Caco-2 (cell line): ENCODE measurements at regions of chr4 and their contacts with region 1.

Region 1: DNA sequence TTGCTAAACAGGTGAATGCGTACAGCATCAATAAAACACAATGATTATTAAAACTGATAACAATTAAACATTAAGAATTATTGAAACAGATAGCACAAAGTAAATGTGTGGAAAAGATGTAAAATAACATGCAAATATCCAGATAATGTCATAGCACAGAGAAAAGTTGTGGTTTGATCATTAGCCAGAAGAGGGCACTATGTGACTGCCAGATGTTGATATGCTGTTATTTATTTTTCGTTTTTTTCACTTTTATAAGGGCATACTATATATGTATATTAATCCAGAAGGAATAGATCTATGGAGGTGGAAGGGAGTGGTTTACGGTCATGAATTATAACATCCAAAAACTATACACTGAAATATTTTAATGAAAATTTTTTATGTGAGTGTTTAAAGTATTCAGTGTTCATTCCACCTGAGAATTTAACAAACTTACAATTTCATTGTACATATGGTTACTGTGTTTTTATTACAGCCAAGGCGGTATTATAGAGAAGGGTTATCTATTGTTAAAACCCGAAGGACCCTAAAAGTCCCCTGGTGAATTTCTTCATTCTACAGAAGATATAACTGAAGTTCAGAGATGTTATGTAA is 211.9 kb upstream of the UGT8 start:
- DNase-seq: peak in 1 of 2 experiments; percentile 24
- H3K4me3 ChIP-seq: no peak overlapping the region
- H3K4me3 Mint-ChIP-seq: no peak overlapping the region
- H3K27ac Mint-ChIP-seq: no peak overlapping the region
- H3K4me1 ChIP-seq: no peaks in the 10 kb centered on the region
- H3K4me1 Mint-ChIP-seq: no peaks in the 10 kb centered on the region
- H3K27me3 ChIP-seq: no peaks in the 10 kb centered on the region
- H3K27me3 Mint-ChIP-seq: no peaks in the 10 kb centered on the region
- CTCF ChIP-seq: peak; percentile 56 to 65

Region 2: GRCh38 chr4:113106108-113106507 is 1280.6 kb before region 1 on chr4:
- CTCF ChIA-PET with region 1: no interaction called
- POLR2A ChIA-PET with region 1: no interaction called
- intact Hi-C with region 1: loop called (anchors 5 kb)
- DNase-seq: peak in 1 of 2 experiments; percentile 41
- H3K4me3 ChIP-seq: no peak overlapping the region
- H3K4me3 Mint-ChIP-seq: no peak overlapping the region
- H3K27ac Mint-ChIP-seq: no peak overlapping the region
- H3K4me1 ChIP-seq: peaks cover 29% of the 10 kb centered on the region
- H3K4me1 Mint-ChIP-seq: peaks cover 20% of the 10 kb centered on the region
- H3K27me3 ChIP-seq: no peaks in the 10 kb centered on the region
- H3K27me3 Mint-ChIP-seq: no peaks in the 10 kb centered on the region
- CTCF ChIP-seq: peak; percentile 41 to 50

Region 3: DNA sequence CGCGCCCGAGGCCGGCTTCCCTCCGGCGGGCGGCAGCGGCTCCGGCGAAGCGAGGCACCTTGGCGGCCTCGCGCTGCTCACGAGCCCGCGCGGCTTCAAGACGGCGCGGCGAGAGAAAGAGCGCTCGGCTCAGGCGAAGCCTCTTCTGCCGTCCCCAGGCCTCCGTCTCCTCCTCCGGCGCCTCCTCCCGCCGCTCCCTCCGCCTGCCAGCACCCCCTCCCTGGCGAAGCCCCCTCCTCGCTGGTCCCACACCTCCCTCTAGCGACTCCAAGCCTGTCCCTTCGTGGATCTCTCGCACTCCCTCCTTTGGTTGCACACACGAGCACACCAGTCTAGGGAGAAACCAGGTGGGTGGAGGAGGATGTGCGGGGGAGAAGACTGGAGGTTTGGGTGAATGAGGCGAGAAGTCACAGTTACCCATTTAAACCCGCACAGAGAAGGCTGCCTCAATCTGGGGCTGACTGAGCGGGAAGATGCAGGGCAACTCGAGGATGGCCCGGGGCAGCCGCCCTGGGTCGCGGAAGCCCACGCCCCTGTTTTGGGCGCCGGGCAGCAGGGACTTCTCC is 625.0 kb before region 1 on chr4 and contains the start of gene CAMK2D:
- CTCF ChIA-PET with region 1: no interaction called
- POLR2A ChIA-PET with region 1: no interaction called
- intact Hi-C with region 1: loop called (anchors 5 kb)
- DNase-seq: peak; percentile 91 to 94
- H3K4me3 ChIP-seq: peak within 1 kb of the TSS; percentile 82
- H3K4me3 Mint-ChIP-seq: peak within 1 kb of the TSS; percentile 96
- H3K27ac Mint-ChIP-seq: peak within 1 kb of the TSS; percentile 91
- H3K4me1 ChIP-seq: peaks cover 37% of the 10 kb centered on the region
- H3K4me1 Mint-ChIP-seq: peaks cover 30% of the 10 kb centered on the region
- H3K27me3 ChIP-seq: no peaks in the 10 kb centered on the region
- H3K27me3 Mint-ChIP-seq: no peaks in the 10 kb centered on the region
- CTCF ChIP-seq: peak; percentile 35 to 82
- total RNA-seq, gene CAMK2D: 56.1 and 65.6 TPM in 2 replicates

Region 4: DNA sequence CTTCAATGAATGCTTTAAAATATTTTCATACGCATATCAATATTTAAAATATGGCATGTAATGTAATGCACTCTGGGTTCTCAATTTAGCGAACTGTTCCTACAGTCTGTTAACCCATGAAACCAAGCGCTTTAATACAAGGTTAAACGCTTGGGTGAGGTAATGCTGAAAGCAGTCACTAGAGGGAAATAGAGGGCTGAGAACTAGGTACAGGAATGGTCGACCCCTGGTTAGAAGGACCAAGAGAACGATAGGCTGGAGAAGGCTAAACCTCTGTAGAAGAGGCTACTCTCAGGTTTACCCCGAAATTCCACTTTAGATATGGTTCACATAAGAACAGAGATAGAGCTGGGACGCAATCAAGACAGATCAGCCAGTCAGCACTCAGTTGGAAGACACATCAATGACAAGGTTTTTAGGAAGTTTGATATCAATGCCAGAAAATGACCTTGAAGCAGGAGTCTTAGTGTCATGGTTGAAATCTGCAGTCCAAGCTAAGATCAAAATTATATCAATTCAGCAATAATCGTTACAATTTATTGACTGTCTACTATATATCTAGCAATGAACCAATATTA is 434.2 kb before region 1 on chr4:
- CTCF ChIA-PET with region 1: no interaction called
- POLR2A ChIA-PET with region 1: no interaction called
- intact Hi-C with region 1: loop called (anchors 1 kb)
- DNase-seq: peak; percentile 38 to 66
- H3K4me3 ChIP-seq: no peak overlapping the region
- H3K4me3 Mint-ChIP-seq: no peak overlapping the region
- H3K27ac Mint-ChIP-seq: no peak overlapping the region
- H3K4me1 ChIP-seq: peaks cover 2% of the 10 kb centered on the region
- H3K4me1 Mint-ChIP-seq: peaks cover 8% of the 10 kb centered on the region
- H3K27me3 ChIP-seq: no peaks in the 10 kb centered on the region
- H3K27me3 Mint-ChIP-seq: no peaks in the 10 kb centered on the region
- CTCF ChIP-seq: peak; percentile 65 to 88

Region 5: DNA sequence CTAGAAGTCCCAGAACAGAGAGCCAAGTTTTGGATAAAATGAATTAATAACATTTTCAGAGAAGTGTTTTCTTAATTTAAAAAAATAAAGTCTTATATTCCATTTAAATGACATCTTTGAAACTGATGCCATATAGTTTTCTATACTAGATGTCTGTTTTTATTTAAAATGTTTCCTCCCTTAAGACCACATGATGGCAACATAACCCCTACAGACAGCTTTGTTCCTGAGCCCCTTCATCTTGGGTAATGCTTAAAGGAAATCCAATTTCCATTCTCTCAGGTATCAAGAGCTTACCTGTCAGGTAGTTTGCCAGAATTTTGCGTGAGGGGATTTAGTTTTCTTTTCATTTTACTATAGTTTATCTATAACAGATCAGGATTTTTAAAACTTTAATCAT is 30.5 kb after region 1 on chr4:
- CTCF ChIA-PET with region 1: no interaction called
- POLR2A ChIA-PET with region 1: no interaction called
- intact Hi-C with region 1: loop called (anchors 2 kb)
- DNase-seq: peak in 1 of 2 experiments; percentile 10
- H3K4me3 ChIP-seq: no peak overlapping the region
- H3K4me3 Mint-ChIP-seq: no peak overlapping the region
- H3K27ac Mint-ChIP-seq: no peak overlapping the region
- H3K4me1 ChIP-seq: peaks cover 7% of the 10 kb centered on the region; the same call in 1 of the 2 replicates
- H3K4me1 Mint-ChIP-seq: no peaks in the 10 kb centered on the region
- H3K27me3 ChIP-seq: no peaks in the 10 kb centered on the region
- H3K27me3 Mint-ChIP-seq: no peaks in the 10 kb centered on the region
- CTCF ChIP-seq: peak in 1 of 2 experiments; percentile 25

Region 6: GRCh38 chr4:114694770-114695169 is 308.0 kb after region 1 on chr4:
- CTCF ChIA-PET with region 1: interaction called, 3 read pairs
- POLR2A ChIA-PET with region 1: no interaction called
- intact Hi-C with region 1: loop called (anchors 1 kb)
- DNase-seq: peak in 1 of 2 experiments; percentile 12
- H3K4me3 ChIP-seq: no peak overlapping the region
- H3K4me3 Mint-ChIP-seq: no peak overlapping the region
- H3K27ac Mint-ChIP-seq: no peak overlapping the region
- H3K4me1 ChIP-seq: no peaks in the 10 kb centered on the region
- H3K4me1 Mint-ChIP-seq: no peaks in the 10 kb centered on the region
- H3K27me3 ChIP-seq: no peaks in the 10 kb centered on the region
- H3K27me3 Mint-ChIP-seq: peaks cover 2% of the 10 kb centered on the region
- CTCF ChIP-seq: peak; percentile 15 to 64